ENCODE measurements at regions of chr16 and their contacts with region 1.

Region 1: DNA sequence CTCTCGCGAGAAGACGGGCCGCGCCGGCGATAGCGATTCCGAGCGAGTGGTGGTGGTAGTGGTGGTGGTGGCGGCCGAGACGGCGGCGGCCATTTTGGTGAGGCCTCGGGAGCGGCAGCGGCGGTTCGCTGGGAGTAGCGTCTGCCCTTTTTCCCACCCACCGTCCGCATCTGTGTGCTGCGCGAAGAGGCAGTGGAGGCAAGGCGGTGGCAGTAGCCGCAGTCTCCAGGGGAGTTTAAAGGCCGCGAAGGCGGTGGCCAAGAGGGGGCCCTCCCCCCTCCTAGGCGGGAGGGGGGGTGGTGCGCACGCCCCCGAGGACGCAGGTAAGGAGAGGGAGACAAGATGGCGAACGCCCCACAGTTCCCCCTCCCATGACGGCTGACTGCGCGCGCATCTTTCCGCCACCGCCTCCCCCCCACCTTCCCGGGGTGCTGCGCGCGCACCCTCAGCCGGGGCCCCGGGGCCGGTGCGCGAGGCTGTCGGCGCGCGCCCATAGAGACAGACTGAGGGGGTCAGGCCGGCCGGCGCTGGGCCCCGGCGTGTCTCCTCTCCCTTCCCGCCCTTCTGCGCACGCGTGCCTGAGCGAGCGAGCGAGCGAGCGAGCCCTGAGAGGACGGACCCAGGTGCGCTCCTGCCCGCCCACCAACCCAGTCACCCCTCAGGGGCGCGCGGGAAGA is 694 bp upstream of the SRCAP start:
- DNase-seq: peak; percentile 96
- H3K4me3 ChIP-seq: peak overlapping the region; percentile 78 to 99 (median 97)
- H3K27ac ChIP-seq: peak overlapping the region; percentile 94
- H3K4me1 ChIP-seq: peaks cover 19% of the 10 kb centered on the region
- H3K27me3 ChIP-seq: no peaks in the 10 kb centered on the region
- CTCF ChIP-seq: no peak

Region 2: GRCh38 chr16:30534368-30535105 is 163.7 kb before region 1 on chr16 and contains the start of gene ZNF747:
- CTCF ChIA-PET with region 1: no interaction called
- dilution Hi-C with region 1: no loop called
- in situ Hi-C with region 1: no loop called
- intact Hi-C with region 1: loop called (anchors 10 kb)
- DNase-seq: peak; percentile 75
- H3K4me3 ChIP-seq: peak within 1 kb of the TSS; percentile 50 to 64 (median 57)
- H3K27ac ChIP-seq: peak within 1 kb of the TSS; percentile 71
- H3K4me1 ChIP-seq: peaks cover 15% of the 10 kb centered on the region
- H3K27me3 ChIP-seq: no peaks in the 10 kb centered on the region
- CTCF ChIP-seq: peak in 1 of 2 donors; percentile 7
- total RNA-seq, gene ZNF747: 6.7 to 11.0 TPM

Region 3: DNA sequence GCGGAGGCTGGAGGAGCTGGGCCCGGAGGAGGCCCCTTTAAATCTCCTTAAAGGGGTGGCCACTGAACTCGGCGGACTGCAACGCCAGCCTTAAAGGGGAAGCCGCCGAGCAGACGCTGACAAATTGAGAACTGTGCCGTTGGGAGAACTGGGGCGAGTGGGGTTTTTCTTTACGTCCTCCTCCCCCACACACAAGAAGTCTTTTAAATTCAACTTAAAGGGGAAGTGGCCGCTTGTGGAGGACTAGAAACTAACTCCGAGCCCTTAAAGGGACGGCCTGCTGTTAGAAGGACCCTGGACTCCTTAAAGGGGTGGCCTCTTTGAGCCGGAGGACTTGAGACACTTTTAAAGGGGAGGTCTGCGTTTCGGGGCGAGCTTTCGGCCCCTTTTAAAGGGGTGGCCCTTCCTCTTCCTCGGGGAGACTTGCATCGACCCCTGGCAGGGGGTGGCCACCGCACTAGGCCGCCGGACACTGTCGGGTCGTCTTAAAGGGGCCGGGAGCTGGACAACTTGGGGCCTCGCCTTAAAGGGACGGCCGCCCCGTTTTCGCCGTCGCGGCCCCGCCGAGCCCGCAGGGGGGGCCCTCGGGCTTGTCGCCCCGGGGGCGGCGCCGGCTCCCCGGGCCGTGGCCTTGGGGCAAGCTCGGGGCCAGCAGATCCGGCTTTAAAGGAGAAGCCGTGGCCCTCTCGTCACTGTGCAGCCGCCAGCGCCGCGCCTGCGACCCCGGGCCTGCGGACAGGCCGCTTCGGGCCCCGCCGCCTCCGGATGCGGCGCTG is 39.4 kb before region 1 on chr16:
- CTCF ChIA-PET with region 1: interaction called, 4 read pairs
- dilution Hi-C with region 1: no loop called
- in situ Hi-C with region 1: no loop called
- intact Hi-C with region 1: loop called (anchors 1 kb)
- DNase-seq: peak; percentile 97
- H3K4me3 ChIP-seq: peak overlapping the region; percentile 49 to 80 (median 65)
- H3K27ac ChIP-seq: peak overlapping the region; percentile 94
- H3K4me1 ChIP-seq: peaks cover 24% of the 10 kb centered on the region
- H3K27me3 ChIP-seq: no peaks in the 10 kb centered on the region
- CTCF ChIP-seq: no peak

Region 4: GRCh38 chr16:30761928-30762810 is 63.9 kb after region 1 on chr16 and contains the starts of genes CFAP119 and RNF40:
- CTCF ChIA-PET with region 1: no interaction called
- dilution Hi-C with region 1: no loop called
- in situ Hi-C with region 1: no loop called
- intact Hi-C with region 1: loop called (anchors 2 kb)
- DNase-seq: peak; percentile 97
- H3K4me3 ChIP-seq: peak within 1 kb of the TSS; percentile 46 to 66 (median 55)
- H3K27ac ChIP-seq: peak within 1 kb of the TSS; percentile 61
- H3K4me1 ChIP-seq: peaks cover 27% of the 10 kb centered on the region
- H3K27me3 ChIP-seq: no peaks in the 10 kb centered on the region
- CTCF ChIP-seq: no peak
- total RNA-seq, gene CFAP119: 1.5 to 8.3 TPM
- total RNA-seq, gene RNF40: 62.8 to 66.4 TPM

Region 5: GRCh38 chr16:30786428-30786935 is 88.2 kb after region 1 on chr16:
- CTCF ChIA-PET with region 1: no interaction called
- dilution Hi-C with region 1: no loop called
- in situ Hi-C with region 1: no loop called
- intact Hi-C with region 1: no loop called
- DNase-seq: peak; percentile 57
- H3K4me3 ChIP-seq: peak overlapping the region; percentile 72 to 87 (median 86)
- H3K27ac ChIP-seq: peak overlapping the region; percentile 59
- H3K4me1 ChIP-seq: peaks cover 12% of the 10 kb centered on the region
- H3K27me3 ChIP-seq: no peaks in the 10 kb centered on the region
- CTCF ChIP-seq: no peak

Region 6: GRCh38 chr16:30805370-30806169 is 107.3 kb after region 1 on chr16:
- CTCF ChIA-PET with region 1: no interaction called
- dilution Hi-C with region 1: no loop called
- in situ Hi-C with region 1: no loop called
- intact Hi-C with region 1: no loop called
- DNase-seq: peak; percentile 70
- H3K4me3 ChIP-seq: peak overlapping the region; percentile 64 to 83 (median 80)
- H3K27ac ChIP-seq: peak overlapping the region; percentile 51
- H3K4me1 ChIP-seq: peaks cover 13% of the 10 kb centered on the region
- H3K27me3 ChIP-seq: no peaks in the 10 kb centered on the region
- CTCF ChIP-seq: no peak

Region 7: GRCh38 chr16:30922960-30923535 is 224.8 kb after region 1 on chr16:
- CTCF ChIA-PET with region 1: no interaction called
- dilution Hi-C with region 1: no loop called
- in situ Hi-C with region 1: no loop called
- intact Hi-C with region 1: loop called (anchors 1 kb)
- DNase-seq: peak; percentile 100
- H3K4me3 ChIP-seq: peak overlapping the region; percentile 54 to 76 (median 70)
- H3K27ac ChIP-seq: peak overlapping the region; percentile 94
- H3K4me1 ChIP-seq: peaks cover 11% of the 10 kb centered on the region
- H3K27me3 ChIP-seq: no peaks in the 10 kb centered on the region
- CTCF ChIP-seq: no peak